A549 (cell line): ENCODE measurements at regions of chr19 and their contacts with region 1.

Region 1: GRCh38 chr19:42184401-42184861 is 33.0 kb downstream of the DEDD2 start:
- DNase-seq: peak; percentile 91 to 96
- ATAC-seq: peak; percentile 77 to 94
- H3K4me3 ChIP-seq: no peak overlapping the region
- H3K27ac ChIP-seq: no peak overlapping the region
- H3K4me1 ChIP-seq: no peaks in the 10 kb centered on the region
- CTCF ChIP-seq: peak; percentile 99
- EP300 ChIP-seq: no peak
- POLR2A ChIP-seq: no peak
- RAD21 ChIP-seq: peak; percentile 94 to 98

Region 2: DNA sequence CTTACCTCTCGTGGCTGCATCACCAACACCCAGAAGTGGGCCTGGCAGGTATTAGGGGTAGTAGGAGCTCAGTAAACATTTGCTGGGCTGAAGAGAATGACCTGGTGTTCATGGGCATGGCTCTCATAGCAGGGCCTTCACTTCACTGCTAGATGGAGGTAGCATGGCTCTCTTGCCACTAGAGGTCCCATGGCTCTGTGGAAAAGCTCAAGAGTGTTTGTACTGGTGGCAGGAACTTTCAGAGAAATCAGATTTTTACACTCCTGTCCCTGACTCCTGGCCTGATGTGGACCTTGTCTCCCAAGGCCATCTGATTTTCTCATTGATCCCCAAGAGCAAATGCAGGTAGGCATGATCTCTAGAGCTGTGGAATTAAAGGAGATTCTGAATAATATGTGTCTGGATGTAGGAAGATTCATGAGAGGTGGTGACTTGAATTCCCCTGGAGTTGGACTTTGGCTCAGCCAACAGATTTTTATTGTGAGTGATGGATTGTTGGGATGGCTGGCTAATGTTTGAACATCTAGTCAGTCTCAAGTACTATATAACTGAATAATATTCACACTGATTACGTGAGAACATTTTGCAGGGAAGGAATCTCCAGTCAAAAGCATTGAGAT is 102.7 kb before region 1 on chr19:
- CTCF ChIA-PET with region 1: interaction called, 22 read pairs
- POLR2A ChIA-PET with region 1: no interaction called
- DNase-seq: peak; percentile 82 to 95
- ATAC-seq: peak; percentile 88 to 92
- H3K4me3 ChIP-seq: no peak overlapping the region
- H3K27ac ChIP-seq: no peak overlapping the region
- H3K4me1 ChIP-seq: peaks cover 26% of the 10 kb centered on the region
- CTCF ChIP-seq: peak; percentile 70
- EP300 ChIP-seq: no peak
- POLR2A ChIP-seq: no peak
- RAD21 ChIP-seq: peak; percentile 52 to 61; a peak in 3 of 5 replicates

Region 3: DNA sequence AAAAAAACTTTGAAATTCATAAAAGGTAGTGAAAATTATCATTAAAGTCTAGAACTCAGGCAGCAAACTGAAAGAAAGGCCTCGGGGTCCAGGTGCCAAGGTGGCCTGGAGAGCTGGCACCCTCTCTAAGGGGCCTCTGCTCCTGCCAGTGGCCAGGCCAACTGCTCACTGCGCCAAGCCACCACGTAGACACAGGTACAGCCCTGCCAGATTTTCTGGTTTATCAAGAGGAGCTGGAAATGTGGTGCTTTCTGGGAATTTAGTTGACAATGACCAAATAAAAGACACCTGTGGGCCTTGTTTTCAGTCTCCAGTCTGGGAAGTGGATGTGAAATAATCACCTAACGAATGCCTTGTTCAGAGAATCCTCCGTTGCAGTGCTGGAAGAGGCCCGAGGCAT is 85.7 kb before region 1 on chr19:
- CTCF ChIA-PET with region 1: interaction called, 14 read pairs
- POLR2A ChIA-PET with region 1: no interaction called
- DNase-seq: no peak
- ATAC-seq: no peak
- H3K4me3 ChIP-seq: no peak overlapping the region
- H3K27ac ChIP-seq: no peak overlapping the region
- H3K4me1 ChIP-seq: no peaks in the 10 kb centered on the region
- CTCF ChIP-seq: no peak
- EP300 ChIP-seq: no peak
- POLR2A ChIP-seq: no peak
- RAD21 ChIP-seq: no peak

Region 4: GRCh38 chr19:42154471-42155323 is 29.7 kb before region 1 on chr19:
- CTCF ChIA-PET with region 1: interaction called, 27 read pairs
- POLR2A ChIA-PET with region 1: no interaction called
- DNase-seq: no peak
- ATAC-seq: peak; percentile 28 to 57; a peak in 3 of 6 replicates
- H3K4me3 ChIP-seq: no peak overlapping the region
- H3K27ac ChIP-seq: no peak overlapping the region
- H3K4me1 ChIP-seq: no peaks in the 10 kb centered on the region
- CTCF ChIP-seq: no peak
- EP300 ChIP-seq: no peak
- POLR2A ChIP-seq: no peak
- RAD21 ChIP-seq: no peak

Region 5: DNA sequence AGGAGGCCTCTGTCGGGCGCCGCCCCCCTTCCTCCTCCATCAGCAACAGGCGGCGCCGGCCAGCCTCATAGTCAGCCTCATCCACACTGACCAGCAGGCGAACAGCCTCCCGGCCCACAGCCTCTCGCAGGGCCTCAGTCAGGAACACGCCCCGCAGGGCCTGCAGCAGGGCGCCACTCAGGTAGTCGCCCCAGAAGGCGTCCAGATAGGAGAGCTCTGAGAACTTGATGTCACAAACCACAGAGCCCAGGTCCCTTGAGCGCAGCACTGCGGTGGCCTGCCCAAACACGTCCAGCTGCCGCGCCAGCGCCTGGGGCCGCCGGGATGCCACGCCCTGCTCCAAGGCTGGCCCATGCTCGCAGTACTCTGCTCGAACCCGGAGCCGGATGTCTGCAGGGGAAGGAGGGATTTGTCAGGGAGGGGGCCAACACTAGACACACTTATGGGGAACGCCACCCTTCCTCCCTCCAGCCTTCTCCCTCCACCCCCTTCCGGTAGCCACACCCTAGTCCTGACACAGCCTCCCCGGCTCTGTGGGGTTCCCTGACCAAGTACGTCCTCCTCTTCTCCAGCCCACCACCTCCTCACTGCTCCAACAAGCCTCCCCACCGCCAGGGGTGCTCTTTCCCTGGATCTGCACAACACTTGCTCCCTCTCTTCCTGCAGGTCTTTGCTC is 15.1 kb after region 1 on chr19:
- CTCF ChIA-PET with region 1: interaction called, 136 read pairs
- POLR2A ChIA-PET with region 1: no interaction called
- DNase-seq: no peak
- ATAC-seq: peak in 1 of 2 experiments; percentile 35; a peak in 3 of 6 replicates
- H3K4me3 ChIP-seq: no peak overlapping the region
- H3K27ac ChIP-seq: peak overlapping the region in 1 of 2 experiments; percentile 9; a peak in 1 of 6 replicates
- H3K4me1 ChIP-seq: no peaks in the 10 kb centered on the region
- CTCF ChIP-seq: no peak
- EP300 ChIP-seq: no peak
- POLR2A ChIP-seq: no peak
- RAD21 ChIP-seq: no peak

Region 6: GRCh38 chr19:42229855-42230351 is 45.5 kb after region 1 on chr19:
- CTCF ChIA-PET with region 1: interaction called, 13 read pairs
- POLR2A ChIA-PET with region 1: no interaction called
- DNase-seq: peak in 1 of 2 experiments; percentile 65
- ATAC-seq: peak; percentile 36 to 56; a peak in 5 of 6 replicates
- H3K4me3 ChIP-seq: no peak overlapping the region
- H3K27ac ChIP-seq: peak overlapping the region in 1 of 2 experiments; percentile 29; a peak in 3 of 6 replicates
- H3K4me1 ChIP-seq: peaks cover 11% of the 10 kb centered on the region; the same call in 2 of the 3 replicates
- CTCF ChIP-seq: no peak
- EP300 ChIP-seq: no peak
- POLR2A ChIP-seq: no peak
- RAD21 ChIP-seq: no peak

Region 7: DNA sequence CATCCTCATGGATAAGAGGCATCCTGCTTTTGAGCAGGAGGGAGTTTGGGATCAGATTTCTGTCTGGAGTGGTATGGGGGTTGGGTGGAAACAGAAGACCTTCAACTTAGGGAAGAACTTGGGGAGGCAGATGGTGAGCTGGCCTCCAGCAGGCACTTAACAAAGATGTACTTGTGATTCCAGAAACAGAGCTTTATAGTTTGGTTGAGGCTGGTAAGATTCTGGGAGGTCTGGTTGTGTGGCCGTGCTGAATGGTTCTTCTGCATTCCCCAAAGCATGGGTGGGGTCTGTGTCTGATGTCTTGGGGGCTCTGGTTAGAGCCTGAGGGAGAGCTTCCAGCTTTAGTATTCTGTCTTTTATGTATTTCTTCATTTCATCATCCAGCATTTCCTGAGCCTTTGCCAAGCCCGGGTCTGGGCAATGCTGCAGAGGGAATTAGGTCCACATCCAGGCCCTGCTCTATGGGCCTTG is 145.8 kb after region 1 on chr19:
- CTCF ChIA-PET with region 1: no interaction called
- POLR2A ChIA-PET with region 1: no interaction called
- DNase-seq: no peak
- ATAC-seq: no peak
- H3K4me3 ChIP-seq: no peak overlapping the region
- H3K27ac ChIP-seq: no peak overlapping the region
- H3K4me1 ChIP-seq: peaks cover 12% of the 10 kb centered on the region; the same call in 2 of the 3 replicates
- CTCF ChIP-seq: no peak
- EP300 ChIP-seq: no peak
- POLR2A ChIP-seq: no peak
- RAD21 ChIP-seq: no peak